ENCODE measurements at regions of chr13 and their contacts with region 1.

Region 1: GRCh38 chr13:75219479-75220237 is 262.3 kb downstream of the TBC1D4 start:
- DNase-seq: peak; percentile 80 to 86
- ATAC-seq: peak; percentile 93 to 99 (median 97)
- H3K4me3 ChIP-seq: peak overlapping the region in 9 of 10 donors; percentile 0 to 47 (median 37)
- H3K27ac ChIP-seq: no peak overlapping the region
- H3K4me1 ChIP-seq: peaks cover 0 to 9% (median 5%) of the 10 kb centered on the region in 9 donors
- H3K27me3 ChIP-seq: peaks cover 0 to 16% (median 0%) of the 10 kb centered on the region in 7 donors
- CTCF ChIP-seq: peak; percentile 91 to 99 (median 98)

Region 2: DNA sequence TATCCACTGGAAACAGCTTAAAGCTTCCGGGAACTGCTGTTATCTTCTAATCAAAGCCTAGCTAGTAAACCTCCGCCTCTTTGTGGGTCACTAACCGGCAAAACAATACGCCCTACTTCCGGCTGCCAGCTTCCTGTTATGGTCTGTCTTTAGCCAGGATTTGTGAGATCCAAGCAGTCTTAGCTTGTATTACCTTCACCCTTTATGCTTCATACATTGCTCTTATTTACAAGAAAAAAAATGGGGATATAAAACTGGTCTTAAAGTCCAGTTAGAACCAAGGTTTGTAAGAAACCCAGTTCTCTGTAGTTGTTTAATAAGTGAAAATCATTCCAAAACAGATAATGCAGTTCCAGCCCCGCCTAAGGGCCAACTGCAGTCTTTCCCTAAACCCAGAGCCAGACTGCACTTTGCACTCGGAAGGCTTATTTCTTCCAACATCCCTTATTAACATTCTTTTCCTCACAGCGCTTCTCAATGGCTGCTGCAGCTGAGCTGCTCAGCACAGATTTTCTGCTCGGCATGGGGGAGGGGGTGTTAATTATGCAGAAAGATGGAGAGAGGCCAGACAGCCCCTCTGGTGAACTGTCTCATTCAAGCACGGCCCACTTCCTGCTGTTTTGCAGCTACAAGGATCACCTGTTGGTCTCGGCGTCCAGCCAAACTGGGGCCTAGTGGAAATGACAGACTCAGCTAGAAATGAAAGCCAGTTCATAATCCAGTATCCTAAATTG is 1453.8 kb before region 1 on chr13:
- intact Hi-C with region 1: loop called in 1 of 10 experiments (anchors 10 kb)
- DNase-seq: peak; percentile 80 to 93
- ATAC-seq: peak; percentile 72 to 93 (median 86)
- H3K4me3 ChIP-seq: peak overlapping the region in 6 of 10 donors; percentile 6 to 27 (median 16)
- H3K27ac ChIP-seq: peak overlapping the region; percentile 1 to 81 (median 66)
- H3K4me1 ChIP-seq: peaks cover 0 to 37% (median 33%) of the 10 kb centered on the region in 9 donors
- H3K27me3 ChIP-seq: no peaks in the 10 kb centered on the region
- CTCF ChIP-seq: peak in 1 of 9 donors; percentile 18

Region 3: GRCh38 chr13:73943137-73943964 is 1276.3 kb before region 1 on chr13:
- intact Hi-C with region 1: loop called in 1 of 10 experiments (anchors 5 kb)
- DNase-seq: no peak
- ATAC-seq: peak in 1 of 8 donors; percentile 21
- H3K4me3 ChIP-seq: no peak overlapping the region
- H3K27ac ChIP-seq: peak overlapping the region in 6 of 10 donors; percentile 13 to 54 (median 29)
- H3K4me1 ChIP-seq: peaks cover 6 to 55% (median 31%) of the 10 kb centered on the region in 9 donors
- H3K27me3 ChIP-seq: no peaks in the 10 kb centered on the region
- CTCF ChIP-seq: no peak

Region 4: DNA sequence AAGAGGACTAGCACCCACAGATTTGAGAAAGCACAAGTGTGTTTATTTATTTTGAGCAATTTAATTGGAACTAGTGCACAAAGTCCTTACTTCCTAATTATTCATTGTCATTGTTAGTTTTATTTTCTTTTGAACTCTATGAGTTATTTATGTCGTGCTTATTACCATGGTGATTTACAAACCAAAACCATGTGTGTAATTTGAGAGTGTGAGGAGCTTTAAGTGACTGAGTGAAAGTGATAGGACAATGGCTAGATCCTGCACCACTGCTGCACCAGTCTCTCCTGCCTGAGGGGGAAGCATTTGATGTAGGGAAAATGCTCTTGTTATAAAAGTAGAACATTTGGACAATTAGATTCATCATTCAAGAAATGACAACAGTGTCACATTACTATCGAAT is 913.2 kb before region 1 on chr13:
- intact Hi-C with region 1: loop called in 1 of 10 experiments (anchors 10 kb)
- DNase-seq: no peak
- ATAC-seq: peak in 3 of 8 donors; percentile 31 to 51 (median 33)
- H3K4me3 ChIP-seq: no peak overlapping the region
- H3K27ac ChIP-seq: no peak overlapping the region
- H3K4me1 ChIP-seq: peaks cover 0 to 4% (median 0%) of the 10 kb centered on the region in 9 donors
- H3K27me3 ChIP-seq: no peaks in the 10 kb centered on the region
- CTCF ChIP-seq: no peak

Region 5: GRCh38 chr13:74575729-74576125 is 643.9 kb before region 1 on chr13:
- intact Hi-C with region 1: loop called in 3 of 10 experiments (anchors 5 to 10 kb)
- DNase-seq: peak; percentile 88 to 95
- ATAC-seq: peak; percentile 96 to 100 (median 99)
- H3K4me3 ChIP-seq: peak overlapping the region in 9 of 10 donors; percentile 21 to 51 (median 44)
- H3K27ac ChIP-seq: peak overlapping the region; percentile 13 to 86 (median 64)
- H3K4me1 ChIP-seq: peaks cover 0 to 36% (median 23%) of the 10 kb centered on the region in 9 donors
- H3K27me3 ChIP-seq: peaks cover 0 to 18% (median 0%) of the 10 kb centered on the region in 7 donors
- CTCF ChIP-seq: peak in 1 of 9 donors; percentile 8